Left colon (tissue), 2 donors: ENCODE measurements at regions of chr7 and their contacts with region 1.

Region 1: DNA sequence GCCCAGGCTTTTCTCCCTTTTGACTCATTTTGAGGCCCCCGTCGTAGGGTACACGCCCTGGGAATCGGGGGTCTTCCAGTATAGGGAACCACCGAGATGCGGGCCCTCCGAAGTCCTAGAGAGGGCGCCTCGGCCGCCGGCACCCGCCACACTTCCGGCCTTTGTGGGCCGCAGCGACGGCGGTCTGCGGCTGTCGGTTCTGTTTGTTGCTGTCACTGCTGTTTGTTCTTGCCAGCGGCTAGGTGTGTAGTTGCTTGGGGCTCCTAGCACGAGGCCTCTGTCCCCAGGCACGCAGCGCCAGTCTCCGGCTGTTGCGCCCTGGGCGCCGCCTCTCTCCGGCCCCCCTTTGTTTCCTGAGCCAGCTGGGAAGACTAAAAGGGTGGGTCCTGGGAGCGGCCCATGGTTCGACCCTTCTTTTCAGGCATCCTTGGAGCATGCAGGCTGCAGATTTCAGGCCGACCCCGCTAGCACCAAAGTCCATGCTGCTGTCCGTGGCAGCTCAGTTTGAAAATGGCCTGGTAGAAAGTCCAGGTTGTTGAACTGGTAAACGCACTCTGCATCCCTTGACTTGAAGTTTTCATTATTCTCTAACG is 17.8 kb upstream of the ZKSCAN1 start:
- DNase-seq: peak; percentile 64 to 76
- ATAC-seq: peak; percentile 75

Region 2: DNA sequence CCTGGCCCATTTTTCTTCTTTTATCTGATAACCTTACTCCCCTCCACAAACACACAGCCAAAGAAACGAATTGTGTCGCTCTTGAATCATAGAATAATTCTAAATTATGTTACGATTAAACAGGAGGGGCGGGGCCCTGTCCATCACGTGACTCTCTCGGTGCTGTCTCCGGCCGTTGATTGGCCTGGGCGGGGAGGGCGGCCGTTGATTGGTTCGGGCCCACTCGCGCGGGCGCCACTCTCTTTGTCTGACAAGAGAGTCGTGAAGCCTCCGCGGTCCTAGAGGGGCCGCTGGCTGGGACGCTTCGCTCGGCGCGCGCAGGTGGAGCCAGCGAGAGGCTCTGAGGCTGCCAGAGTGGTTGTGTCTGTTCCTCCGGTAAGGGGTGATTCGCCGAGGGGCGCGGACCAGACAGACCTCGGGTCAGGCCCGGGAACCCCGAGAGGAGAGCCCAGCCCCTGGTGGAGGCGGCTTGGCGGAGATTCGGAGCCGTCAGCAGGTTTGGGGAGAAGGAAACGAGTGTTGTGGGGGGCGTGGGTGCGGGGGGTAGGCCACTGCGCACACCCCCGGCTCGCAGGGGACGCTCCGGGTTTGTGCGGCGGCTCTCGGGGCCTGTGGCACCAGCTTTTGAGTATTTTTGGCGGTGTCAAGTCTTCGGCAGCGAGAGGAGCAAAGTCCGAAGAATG is 524.9 kb before region 1 on chr7 and contains the start of gene ZNF789:
- intact Hi-C with region 1: no loop called
- DNase-seq: peak; percentile 98 to 99
- ATAC-seq: peak; percentile 91
- total RNA-seq, gene ZNF789: 15.4 to 25.5 TPM

Region 3: DNA sequence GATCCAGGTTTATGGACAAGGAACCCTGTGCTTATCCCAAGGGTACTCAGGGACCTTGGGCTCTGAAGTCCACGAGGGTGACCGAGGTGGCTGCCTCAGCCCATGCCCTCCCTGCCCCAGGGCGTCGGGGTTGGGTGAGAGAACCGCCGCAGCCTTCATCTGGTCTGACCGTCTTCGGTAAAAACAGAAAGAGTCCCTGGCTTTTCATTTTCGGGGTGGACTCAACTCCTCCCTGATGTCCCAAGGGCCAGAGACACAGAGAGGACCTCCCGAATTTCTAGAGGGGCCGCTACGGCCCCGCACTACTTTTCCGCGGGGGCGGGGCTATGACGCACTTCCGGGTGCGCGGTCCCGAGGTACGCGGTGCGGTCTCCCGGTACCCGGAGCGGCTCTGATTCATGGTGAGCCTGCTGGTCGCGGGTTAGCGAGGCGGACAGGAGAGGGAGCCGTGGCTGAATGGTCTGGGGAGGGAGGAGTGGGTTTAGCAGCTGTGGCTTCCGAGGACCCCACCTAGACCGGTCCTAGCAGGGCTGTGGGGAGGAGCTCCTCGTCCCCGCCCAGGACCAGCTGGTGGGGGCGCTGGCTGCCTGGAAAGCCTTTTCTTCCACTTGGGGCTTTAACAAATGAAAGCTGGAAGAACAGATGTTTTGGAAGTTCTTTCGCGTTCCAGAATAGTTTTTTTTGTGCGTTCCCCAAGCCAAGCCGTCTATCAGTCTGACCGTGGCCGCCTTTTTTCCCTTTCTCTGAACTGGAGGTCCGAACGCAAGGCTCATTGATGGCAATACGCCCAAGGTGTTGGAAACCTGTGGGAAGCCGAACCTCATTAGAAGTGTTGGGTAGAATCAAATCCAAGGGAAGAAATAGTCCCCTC is 52.0 kb after region 1 on chr7 and contains the start of gene ZSCAN21:
- intact Hi-C with region 1: loop called (anchors 10 kb)
- DNase-seq: peak; percentile 81 to 89
- ATAC-seq: peak; percentile 82
- total RNA-seq, gene ZSCAN21: 6.7 to 7.1 TPM

Region 4: DNA sequence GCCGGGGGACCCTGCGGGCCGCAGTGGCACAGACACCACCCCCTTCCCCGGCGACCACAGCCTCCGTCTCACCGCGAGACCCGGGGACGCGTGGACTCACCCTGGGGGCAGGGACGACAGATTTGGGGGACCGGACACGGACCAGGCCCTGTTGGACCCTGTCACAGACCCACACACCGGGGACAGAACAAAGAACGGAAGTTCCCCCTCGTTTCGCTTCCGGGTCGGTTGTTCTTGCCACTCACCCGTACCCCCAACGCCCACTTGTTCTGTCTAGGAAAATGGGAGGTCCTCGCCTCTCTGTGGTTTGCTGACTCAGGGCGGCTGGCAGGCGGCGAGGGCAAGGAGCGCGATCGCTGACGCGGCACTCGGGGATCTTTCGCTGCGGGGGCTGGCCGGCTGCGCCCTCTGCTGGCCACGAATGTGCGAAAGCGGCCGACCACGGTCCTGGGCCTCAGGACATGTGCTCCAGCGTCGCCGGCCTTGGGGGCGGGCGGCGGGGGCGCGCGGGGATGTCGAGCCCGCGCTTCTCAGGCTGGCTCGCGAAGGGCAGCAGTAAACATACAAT is 84.0 kb after region 1 on chr7 and contains the start of gene ZNF3:
- intact Hi-C with region 1: loop called in 1 of 2 experiments (anchors 10 kb)
- DNase-seq: peak; percentile 98
- ATAC-seq: peak; percentile 74
- total RNA-seq, gene ZNF3: 34.0 to 37.2 TPM

Region 5: GRCh38 chr7:100132697-100133151 is 135.1 kb after region 1 on chr7:
- intact Hi-C with region 1: loop called in 1 of 2 experiments (anchors 10 kb)
- DNase-seq: peak; percentile 55 to 73
- ATAC-seq: peak; percentile 69